Common myeloid progenitor, CD34-positive (primary cell): ENCODE measurements at regions of chr2 and their contacts with region 1.

Region 1: GRCh38 chr2:85266146-85267041 is 61.4 kb downstream of the TGOLN2 start:
- DNase-seq: peak; percentile 34 to 62 (median 48)
- H3K4me3 ChIP-seq: no peak overlapping the region
- H3K27ac ChIP-seq: no peak overlapping the region
- H3K4me1 ChIP-seq: no peaks in the 10 kb centered on the region
- H3K27me3 ChIP-seq: no peaks in the 10 kb centered on the region

Region 2: GRCh38 chr2:85119900-85120299 is 146.5 kb before region 1 on chr2:
- CTCF ChIA-PET with region 1: no interaction called
- POLR2A ChIA-PET with region 1: no interaction called
- DNase-seq: no peak
- H3K4me3 ChIP-seq: no peak overlapping the region
- H3K27ac ChIP-seq: no peak overlapping the region
- H3K4me1 ChIP-seq: no peaks in the 10 kb centered on the region
- H3K27me3 ChIP-seq: peaks cover 0 to 2% (median 0%) of the 10 kb centered on the region in 5 experiments

Region 3: GRCh38 chr2:85148182-85148581 is 118.2 kb before region 1 on chr2:
- CTCF ChIA-PET with region 1: no interaction called
- POLR2A ChIA-PET with region 1: no interaction called
- DNase-seq: no peak
- H3K4me3 ChIP-seq: no peak overlapping the region
- H3K27ac ChIP-seq: no peak overlapping the region
- H3K4me1 ChIP-seq: no peaks in the 10 kb centered on the region
- H3K27me3 ChIP-seq: peaks cover 0 to 5% (median 0%) of the 10 kb centered on the region in 5 experiments

Region 4: DNA sequence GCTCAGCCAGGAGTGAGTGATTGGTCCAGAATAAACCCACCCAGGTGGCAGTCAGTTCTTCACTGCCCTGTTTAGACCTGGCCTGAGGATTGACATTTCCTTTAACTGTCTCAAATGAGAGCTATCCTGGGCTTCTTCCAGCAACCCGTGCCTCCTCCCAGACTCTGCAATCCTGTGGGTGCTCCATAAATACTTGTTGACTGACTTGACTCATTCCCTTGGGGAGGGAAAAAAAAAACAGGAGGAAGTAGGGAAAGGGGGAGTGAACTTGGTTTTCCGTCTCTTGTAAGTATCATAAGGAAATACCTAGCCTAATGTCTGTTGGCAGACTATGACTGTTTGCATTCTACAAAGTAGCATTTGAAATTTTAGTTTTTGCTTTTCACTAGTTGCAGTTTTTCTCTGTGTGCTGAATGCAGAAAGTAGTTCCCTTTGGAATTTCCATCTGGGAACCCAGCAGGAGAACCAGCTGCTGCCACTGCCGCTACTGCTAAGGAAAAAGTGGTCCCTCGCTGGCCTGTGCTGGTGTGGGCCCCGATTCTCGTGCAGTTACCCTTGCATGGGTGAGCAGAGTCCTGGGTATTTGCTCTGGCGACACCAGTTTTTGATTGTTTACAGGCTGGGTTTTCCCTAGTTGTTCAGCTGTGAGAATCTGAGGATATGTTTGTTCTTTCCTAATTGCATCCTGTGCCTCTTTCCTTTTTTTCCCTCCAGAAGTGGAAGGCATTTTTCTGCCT is 17.5 kb before region 1 on chr2:
- CTCF ChIA-PET with region 1: interaction called, 10 read pairs
- POLR2A ChIA-PET with region 1: no interaction called
- DNase-seq: no peak
- H3K4me3 ChIP-seq: no peak overlapping the region
- H3K27ac ChIP-seq: no peak overlapping the region
- H3K4me1 ChIP-seq: no peaks in the 10 kb centered on the region
- H3K27me3 ChIP-seq: peaks cover 0 to 5% (median 0%) of the 10 kb centered on the region in 5 experiments

Region 5: GRCh38 chr2:85561317-85561979 is 295.1 kb after region 1 on chr2 and contains the start of gene GGCX:
- CTCF ChIA-PET with region 1: no interaction called
- POLR2A ChIA-PET with region 1: no interaction called
- DNase-seq: peak; percentile 96 to 98 (median 98)
- H3K4me3 ChIP-seq: peak within 1 kb of the TSS; percentile 89 to 97 (median 91)
- H3K27ac ChIP-seq: peak within 1 kb of the TSS; percentile 86 to 93
- H3K4me1 ChIP-seq: peaks cover 6 to 25% (median 14%) of the 10 kb centered on the region in 4 experiments
- H3K27me3 ChIP-seq: no peaks in the 10 kb centered on the region